ENCODE measurements at regions of chr1 and their contacts with region 1.

Region 1: DNA sequence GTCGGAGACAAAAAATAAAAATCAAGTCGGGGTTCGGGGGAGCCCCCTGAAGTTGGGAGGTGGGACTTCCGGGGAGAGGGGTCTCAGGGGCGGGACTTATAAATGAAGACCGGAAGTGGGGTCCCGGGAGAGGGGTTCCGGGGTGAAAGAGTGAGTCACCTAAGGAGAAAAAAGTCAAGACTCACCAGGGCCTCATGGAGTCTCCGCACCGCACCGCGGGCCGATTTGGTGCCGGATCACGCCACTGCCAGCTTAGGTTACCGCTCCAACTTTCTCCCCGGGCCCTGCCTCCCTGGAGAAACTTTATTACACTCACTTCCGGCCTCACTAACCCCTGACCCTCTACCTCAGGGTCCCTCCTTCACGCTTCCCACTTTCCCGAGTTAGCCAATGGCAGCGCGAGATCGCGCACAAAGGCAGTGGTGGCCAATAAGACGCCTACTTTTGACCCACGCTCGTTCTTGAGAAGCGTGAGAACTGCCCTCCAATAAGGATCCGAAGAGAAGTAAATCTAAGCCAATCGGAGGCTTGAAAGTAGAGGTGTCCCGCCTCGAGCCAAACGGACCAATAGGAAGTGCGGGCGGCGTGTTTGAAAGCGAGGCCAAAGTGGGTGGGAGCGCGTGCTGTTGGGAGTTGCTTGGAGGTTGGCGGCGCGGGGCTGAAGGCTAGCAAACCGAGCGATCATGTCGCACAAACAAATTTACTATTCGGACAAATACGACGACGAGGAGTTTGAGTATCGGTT is at the start of gene CKS1B:
- DNase-seq: peak; percentile 98
- ATAC-seq: peak; percentile 86
- H3K4me3 Mint-ChIP-seq: no peak within 1 kb of the TSS
- H3K27ac Mint-ChIP-seq: no peak within 1 kb of the TSS
- H3K4me1 Mint-ChIP-seq: peaks cover 30% of the 10 kb centered on the region
- H3K27me3 Mint-ChIP-seq: no peaks in the 10 kb centered on the region
- total RNA-seq, gene CKS1B: 190 to 196 TPM

Region 2: DNA sequence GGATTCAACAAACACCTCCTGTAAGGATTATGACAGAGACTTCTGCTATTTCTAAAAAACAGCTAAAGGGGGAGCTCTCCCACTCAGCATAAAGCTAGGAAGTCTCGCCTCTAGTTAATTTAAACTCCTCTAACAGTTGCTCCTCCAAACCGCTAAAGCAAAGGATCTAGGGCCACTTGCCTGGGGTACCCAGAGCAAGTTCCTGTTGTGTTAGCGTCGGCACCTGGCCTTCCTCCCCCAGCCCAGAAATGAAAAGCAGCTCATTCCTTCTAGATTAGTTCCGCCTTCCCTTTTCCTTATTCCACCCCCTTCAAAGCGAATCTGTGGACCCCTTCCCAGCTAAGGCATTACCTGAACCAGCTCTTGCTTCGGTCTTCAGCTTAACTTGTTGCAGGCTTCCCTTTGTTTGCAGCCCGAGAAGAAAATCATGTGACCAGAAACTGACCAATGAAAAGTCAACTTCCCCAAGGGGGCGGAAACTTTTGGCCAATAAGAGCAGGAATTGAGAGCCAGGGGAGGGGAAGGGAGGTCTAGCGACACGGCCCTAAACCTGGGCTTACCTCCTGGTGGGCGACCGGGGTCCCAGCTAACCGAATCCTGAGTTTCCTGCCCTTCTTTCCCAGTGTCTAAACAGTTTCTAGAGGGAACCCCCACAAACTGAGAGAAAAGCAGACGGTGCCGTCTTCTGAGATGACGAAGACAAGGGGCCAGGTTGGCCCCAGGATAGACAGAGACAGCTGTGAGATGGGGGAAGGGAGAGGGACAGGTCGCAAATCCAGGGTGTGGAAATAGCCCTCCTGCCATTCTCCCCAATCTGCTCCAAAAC is 18.3 kb before region 1 on chr1 and contains the start of gene PBXIP1:
- CTCF ChIA-PET with region 1: interaction called, 15 read pairs
- POLR2A ChIA-PET with region 1: interaction called, 5 read pairs
- intact Hi-C with region 1: loop called (anchors 1 kb)
- DNase-seq: peak; percentile 83
- ATAC-seq: peak; percentile 54
- H3K4me3 Mint-ChIP-seq: peak within 1 kb of the TSS; percentile 85
- H3K27ac Mint-ChIP-seq: peak within 1 kb of the TSS; percentile 95
- H3K4me1 Mint-ChIP-seq: peaks cover 82% of the 10 kb centered on the region
- H3K27me3 Mint-ChIP-seq: no peaks in the 10 kb centered on the region
- total RNA-seq, gene PBXIP1: 22.6 to 28.1 TPM

Region 3: DNA sequence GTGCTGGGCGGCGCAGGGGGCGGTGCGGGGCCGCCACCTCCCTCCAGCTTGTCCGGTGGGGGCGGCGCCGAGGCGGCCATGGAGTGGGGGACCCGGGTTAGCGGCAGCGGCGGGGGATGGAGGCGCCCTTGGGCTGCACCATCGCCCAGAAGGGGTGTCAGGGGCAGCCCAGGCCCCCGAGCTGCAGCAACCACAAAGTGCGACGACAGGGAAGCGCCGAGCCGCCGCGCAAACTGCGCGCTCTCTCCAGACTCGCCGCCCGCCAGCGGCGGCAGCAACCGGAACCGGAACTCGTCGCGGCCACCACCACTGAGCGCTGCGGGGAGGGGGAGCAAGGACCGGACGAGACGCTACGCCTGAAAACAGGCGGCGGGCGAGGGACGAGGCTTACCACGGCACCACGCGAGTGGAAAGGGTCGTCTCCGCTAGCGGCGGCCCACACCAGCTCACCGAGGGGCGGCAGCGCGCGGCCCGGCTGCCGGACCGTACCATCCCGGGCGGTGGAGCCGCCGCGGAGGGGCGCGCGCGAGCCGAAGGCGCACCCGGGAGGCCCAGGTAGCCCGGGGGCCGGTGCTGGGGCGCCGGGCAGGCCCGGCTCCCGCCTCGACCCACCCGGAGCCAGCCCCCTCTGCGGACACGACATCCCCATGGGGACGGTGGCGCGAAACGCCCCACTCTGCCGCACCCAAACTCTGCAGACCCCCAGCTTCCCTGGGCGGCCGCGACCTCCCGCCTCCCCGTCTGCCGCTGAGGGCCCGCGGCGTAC is 12.6 kb before region 1 on chr1 and contains the start of gene PYGO2:
- CTCF ChIA-PET with region 1: interaction called, 6 read pairs
- POLR2A ChIA-PET with region 1: interaction called, 5 read pairs
- intact Hi-C with region 1: loop called (anchors 1 kb)
- DNase-seq: peak; percentile 90
- ATAC-seq: peak; percentile 81
- H3K4me3 Mint-ChIP-seq: peak within 1 kb of the TSS; percentile 91
- H3K27ac Mint-ChIP-seq: peak within 1 kb of the TSS; percentile 93
- H3K4me1 Mint-ChIP-seq: peaks cover 43% of the 10 kb centered on the region
- H3K27me3 Mint-ChIP-seq: no peaks in the 10 kb centered on the region
- total RNA-seq, gene PYGO2: 24.5 to 25.6 TPM

Region 4: DNA sequence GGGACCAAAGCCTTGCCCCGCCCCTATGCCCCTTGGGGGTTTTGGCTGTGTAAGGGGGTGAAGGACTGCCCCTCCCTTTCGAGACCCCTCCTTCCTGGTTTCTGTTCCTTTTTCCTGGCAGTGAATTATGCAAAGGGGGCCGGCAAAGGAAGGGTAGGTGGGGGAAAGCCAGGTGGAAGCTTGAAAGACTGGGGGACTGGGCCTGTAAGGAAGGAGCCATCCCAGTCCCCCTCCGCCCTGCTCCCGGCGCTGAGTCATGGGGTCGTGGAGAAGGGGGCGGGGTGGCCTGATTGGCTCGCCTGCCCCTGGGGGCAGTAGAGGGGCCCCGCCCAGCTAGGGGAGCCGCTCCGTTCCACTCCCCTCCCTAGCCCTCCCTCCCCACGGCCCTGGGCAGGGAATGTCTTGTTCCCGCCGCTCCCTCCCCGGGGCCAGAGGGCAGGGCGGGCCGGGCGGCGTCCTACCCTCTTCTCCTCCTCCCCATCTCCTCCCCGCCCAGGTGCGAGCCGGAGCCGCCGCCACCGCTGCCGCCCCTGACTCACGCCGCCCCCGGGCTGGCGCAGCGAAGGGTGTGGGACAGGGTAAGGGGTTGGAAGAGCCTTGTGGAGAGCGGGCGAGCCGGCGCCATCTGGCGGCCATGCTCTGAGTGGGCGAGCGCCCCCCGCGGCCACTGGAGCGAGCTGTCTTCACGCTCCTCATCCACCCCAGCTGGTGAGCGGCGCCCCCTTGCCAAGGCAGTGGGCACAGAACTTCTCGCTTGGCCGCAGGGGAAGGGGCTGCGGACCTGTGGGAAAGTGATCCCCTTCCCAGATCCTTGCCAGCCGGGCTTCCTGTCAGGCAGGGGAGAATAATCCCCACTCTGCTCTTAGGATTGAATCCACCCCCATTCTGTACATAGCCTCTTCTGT is 43.1 kb after region 1 on chr1:
- CTCF ChIA-PET with region 1: interaction called, 6 read pairs
- POLR2A ChIA-PET with region 1: interaction called, 4 read pairs
- intact Hi-C with region 1: loop called (anchors 1 to 2 kb)
- DNase-seq: peak; percentile 97
- ATAC-seq: peak; percentile 87
- H3K4me3 Mint-ChIP-seq: peak overlapping the region; percentile 53
- H3K27ac Mint-ChIP-seq: peak overlapping the region; percentile 69
- H3K4me1 Mint-ChIP-seq: peaks cover 69% of the 10 kb centered on the region
- H3K27me3 Mint-ChIP-seq: no peaks in the 10 kb centered on the region

Region 5: GRCh38 chr1:155050560-155051341 is 76.5 kb after region 1 on chr1 and contains the start of gene ADAM15:
- CTCF ChIA-PET with region 1: interaction called, 4 read pairs
- POLR2A ChIA-PET with region 1: no interaction called
- intact Hi-C with region 1: loop called in 1 of 2 experiments (anchors 1 kb)
- DNase-seq: peak; percentile 90
- ATAC-seq: peak; percentile 78
- H3K4me3 Mint-ChIP-seq: peak within 1 kb of the TSS; percentile 74
- H3K27ac Mint-ChIP-seq: peak within 1 kb of the TSS; percentile 80
- H3K4me1 Mint-ChIP-seq: peaks cover 20% of the 10 kb centered on the region
- H3K27me3 Mint-ChIP-seq: no peaks in the 10 kb centered on the region
- total RNA-seq, gene ADAM15: 42.4 to 48.8 TPM

Region 6: GRCh38 chr1:155135415-155136028 is 161.3 kb after region 1 on chr1 and contains the start of gene SLC50A1:
- CTCF ChIA-PET with region 1: no interaction called
- POLR2A ChIA-PET with region 1: no interaction called
- intact Hi-C with region 1: loop called in 1 of 2 experiments (anchors 1 kb)
- DNase-seq: peak; percentile 97
- ATAC-seq: peak; percentile 78
- H3K4me3 Mint-ChIP-seq: peak within 1 kb of the TSS; percentile 96
- H3K27ac Mint-ChIP-seq: peak within 1 kb of the TSS; percentile 97
- H3K4me1 Mint-ChIP-seq: peaks cover 35% of the 10 kb centered on the region
- H3K27me3 Mint-ChIP-seq: no peaks in the 10 kb centered on the region
- total RNA-seq, gene SLC50A1: 50.2 to 58.0 TPM

Region 7: GRCh38 chr1:155688324-155689080 is 714.3 kb after region 1 on chr1 and contains the start of gene YY1AP1:
- CTCF ChIA-PET with region 1: no interaction called
- POLR2A ChIA-PET with region 1: no interaction called
- intact Hi-C with region 1: loop called in 1 of 2 experiments (anchors 10 kb)
- DNase-seq: peak; percentile 95
- ATAC-seq: peak; percentile 86
- H3K4me3 Mint-ChIP-seq: peak within 1 kb of the TSS; percentile 97
- H3K27ac Mint-ChIP-seq: peak within 1 kb of the TSS; percentile 94
- H3K4me1 Mint-ChIP-seq: peaks cover 29% of the 10 kb centered on the region
- H3K27me3 Mint-ChIP-seq: no peaks in the 10 kb centered on the region
- total RNA-seq, gene YY1AP1: 59.6 to 76.0 TPM